ENCODE measurements at regions of chr1 and their contacts with region 1.

Region 1: GRCh38 chr1:27154991-27155781 is at the start of gene SLC9A1:
- DNase-seq: peak; percentile 93 to 97 (median 97)
- H3K4me3 ChIP-seq: peak within 1 kb of the TSS; percentile 67 to 91 (median 84)
- H3K27ac ChIP-seq: peak within 1 kb of the TSS; percentile 98
- H3K4me1 ChIP-seq: peaks cover 15 to 38% (median 32%) of the 10 kb centered on the region in 4 experiments
- H3K27me3 ChIP-seq: no peaks in the 10 kb centered on the region

Region 2: GRCh38 chr1:27136998-27137542 is 18.1 kb before region 1 on chr1:
- CTCF ChIA-PET with region 1: interaction called, 70 read pairs
- POLR2A ChIA-PET with region 1: interaction called, 24 read pairs
- DNase-seq: peak; percentile 59 to 87 (median 81)
- H3K4me3 ChIP-seq: peak overlapping the region in 4 of 7 experiments; percentile 3 to 49 (median 30)
- H3K27ac ChIP-seq: peak overlapping the region; percentile 2 to 76
- H3K4me1 ChIP-seq: peaks cover 9 to 50% (median 40%) of the 10 kb centered on the region in 4 experiments
- H3K27me3 ChIP-seq: no peaks in the 10 kb centered on the region

Region 3: DNA sequence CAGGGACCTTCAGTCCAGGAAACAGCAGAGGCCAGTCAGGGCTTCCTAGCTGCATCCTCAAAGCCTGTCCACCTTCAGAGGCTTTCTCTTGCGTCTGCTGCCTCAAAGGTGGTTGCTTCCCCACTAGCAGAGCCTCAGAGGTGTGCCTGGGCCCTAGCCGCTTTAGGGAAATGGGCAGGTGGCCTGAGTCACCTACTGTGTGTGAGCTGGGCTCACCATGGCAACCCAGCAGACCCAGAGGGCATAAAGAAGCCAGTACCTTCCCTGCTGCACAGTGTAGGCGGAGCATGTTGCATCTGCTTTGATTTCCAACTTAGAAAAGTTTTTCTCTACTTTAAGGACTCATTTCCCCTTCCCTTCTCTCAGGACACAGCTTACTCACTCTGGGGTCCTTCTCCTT is 12.7 kb before region 1 on chr1:
- CTCF ChIA-PET with region 1: interaction called, 70 read pairs
- POLR2A ChIA-PET with region 1: interaction called, 24 read pairs
- DNase-seq: no peak
- H3K4me3 ChIP-seq: no peak overlapping the region
- H3K27ac ChIP-seq: no peak overlapping the region
- H3K4me1 ChIP-seq: peaks cover 0 to 21% (median 13%) of the 10 kb centered on the region in 4 experiments
- H3K27me3 ChIP-seq: no peaks in the 10 kb centered on the region

Measured in common myeloid progenitor, CD34-positive (primary cell).